ENCODE measurements at regions of chr6 and their contacts with region 1.

Region 1: DNA sequence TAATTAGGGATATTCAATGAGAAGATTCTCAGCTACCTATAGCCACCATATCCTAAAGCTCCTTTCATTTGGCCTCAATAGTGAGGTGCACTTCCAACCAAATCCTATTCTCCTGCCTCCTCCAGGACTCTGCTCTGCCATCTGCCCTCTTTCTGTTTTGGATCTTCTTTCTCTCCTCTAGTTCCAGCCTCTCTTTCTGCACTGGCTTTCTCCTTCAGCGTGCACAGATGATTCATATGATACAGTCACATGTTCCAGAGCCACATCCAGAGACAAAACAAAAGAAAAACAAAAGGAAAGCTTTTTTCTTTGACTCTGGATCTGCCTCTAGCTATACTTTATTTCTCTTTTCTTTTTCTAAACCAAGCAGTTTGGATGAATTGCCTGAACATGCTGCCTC is 531.9 kb upstream of the MAN1A1 start:
- DNase-seq: no peak
- H3K4me3 Mint-ChIP-seq: no peak overlapping the region
- H3K27ac Mint-ChIP-seq: no peak overlapping the region
- H3K4me1 Mint-ChIP-seq: no peaks in the 10 kb centered on the region
- H3K27me3 Mint-ChIP-seq: no peaks in the 10 kb centered on the region

Region 2: GRCh38 chr6:119856136-119856535 is 25.3 kb before region 1 on chr6:
- intact Hi-C with region 1: loop called (anchors 1 kb)
- DNase-seq: no peak
- H3K4me3 Mint-ChIP-seq: peak overlapping the region; percentile 56
- H3K27ac Mint-ChIP-seq: no peak overlapping the region
- H3K4me1 Mint-ChIP-seq: peaks cover 14% of the 10 kb centered on the region
- H3K27me3 Mint-ChIP-seq: peaks cover 9% of the 10 kb centered on the region